ENCODE measurements at regions of chr4 and their contacts with region 1.

Region 1: GRCh38 chr4:121192480-121192879 is 28.4 kb upstream of the TNIP3 start:
- DNase-seq: peak; percentile 16
- ATAC-seq: no peak
- H3K4me3 ChIP-seq: no peak overlapping the region
- H3K27ac ChIP-seq: no peak overlapping the region
- H3K4me1 ChIP-seq: no peaks in the 10 kb centered on the region
- H3K27me3 ChIP-seq: no peaks in the 10 kb centered on the region; a peak in 1 of 5 replicates
- CTCF ChIP-seq: peak; percentile 77
- EP300 ChIP-seq: no peak
- POLR2A ChIP-seq: no peak
- RAD21 ChIP-seq: peak; percentile 32; the same call in 1 of the 2 replicates

Region 2: GRCh38 chr4:121252224-121252806 is 59.8 kb after region 1 on chr4:
- CTCF ChIA-PET with region 1: interaction called, 24 read pairs
- POLR2A ChIA-PET with region 1: no interaction called
- in situ Hi-C with region 1: loop called (anchors 5 kb)
- intact Hi-C with region 1: loop called (anchors 1 kb)
- DNase-seq: peak; percentile 51
- ATAC-seq: peak; percentile 94
- H3K4me3 ChIP-seq: no peak overlapping the region
- H3K27ac ChIP-seq: no peak overlapping the region
- H3K4me1 ChIP-seq: no peaks in the 10 kb centered on the region
- H3K27me3 ChIP-seq: no peaks in the 10 kb centered on the region
- CTCF ChIP-seq: peak; percentile 80
- EP300 ChIP-seq: no peak
- POLR2A ChIP-seq: no peak
- RAD21 ChIP-seq: peak; percentile 49

Region 3: DNA sequence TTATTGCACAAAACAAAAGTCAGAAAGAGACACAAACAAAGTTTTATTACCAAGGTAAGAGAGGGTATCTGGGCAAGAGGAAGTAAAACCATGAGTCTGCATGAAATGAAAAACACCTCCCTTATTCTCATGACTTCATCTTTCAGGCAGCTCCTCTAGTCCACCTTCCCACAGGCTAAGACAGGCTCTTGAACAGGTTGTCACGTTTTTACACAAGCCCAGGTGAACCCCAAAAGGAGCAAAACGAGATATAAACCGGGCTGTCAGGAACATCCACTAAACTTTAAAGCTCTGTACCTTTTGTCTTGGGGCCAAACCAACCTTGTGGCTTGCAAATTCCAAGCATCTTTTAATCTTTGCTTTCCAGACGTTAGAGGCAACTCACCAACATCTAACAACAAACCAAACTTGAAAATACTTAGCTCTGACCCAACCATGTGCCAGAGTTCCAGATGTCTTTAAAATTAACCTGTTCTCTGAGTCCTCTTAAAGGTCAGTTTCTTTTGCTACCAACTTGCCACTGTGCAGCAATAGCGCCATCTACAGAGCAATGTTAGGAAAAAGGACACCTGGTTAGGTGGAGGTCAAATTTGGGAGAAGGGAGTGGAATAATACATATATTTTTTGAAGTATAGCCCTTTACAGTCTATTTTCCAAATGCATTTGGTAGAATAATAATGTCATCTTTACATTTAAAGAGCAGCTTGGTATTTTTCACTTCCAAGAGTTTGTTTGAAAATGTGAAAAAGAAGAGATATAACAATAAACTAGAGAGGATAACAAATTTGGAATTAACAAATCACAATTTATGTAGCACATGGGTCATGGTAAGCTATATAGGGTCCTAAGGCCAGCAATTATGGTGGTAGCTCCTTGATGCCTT is 115.2 kb after region 1 on chr4:
- CTCF ChIA-PET with region 1: no interaction called
- POLR2A ChIA-PET with region 1: no interaction called
- in situ Hi-C with region 1: no loop called
- intact Hi-C with region 1: loop called (anchors 5 kb)
- DNase-seq: peak; percentile 34
- ATAC-seq: peak; percentile 61; the same call in 2 of the 3 replicates
- H3K4me3 ChIP-seq: no peak overlapping the region
- H3K27ac ChIP-seq: no peak overlapping the region
- H3K4me1 ChIP-seq: no peaks in the 10 kb centered on the region
- H3K27me3 ChIP-seq: no peaks in the 10 kb centered on the region
- CTCF ChIP-seq: peak; percentile 56
- EP300 ChIP-seq: no peak
- POLR2A ChIP-seq: no peak
- RAD21 ChIP-seq: 0 out of 2 replicates have a peak, but pooled peaks have one; percentile 17

Region 4: DNA sequence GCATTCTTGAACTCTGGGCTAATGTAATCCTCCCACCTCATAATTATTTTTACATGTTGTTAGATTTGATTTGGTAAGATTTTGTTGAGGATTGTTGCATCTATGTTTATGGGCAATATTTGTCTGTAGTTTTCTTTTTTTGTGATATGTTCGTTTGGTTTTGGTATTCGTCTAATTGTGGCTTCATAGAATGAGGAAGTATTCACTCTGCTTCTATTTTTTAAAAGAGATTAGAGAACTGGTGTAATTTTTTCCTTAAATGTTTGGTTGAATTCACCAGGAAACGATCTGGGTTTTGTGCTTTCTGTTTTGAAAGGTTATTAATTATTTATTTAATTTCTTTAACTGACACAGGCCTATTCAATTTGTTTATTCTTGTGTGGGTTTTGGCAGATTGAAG is 1891.2 kb after region 1 on chr4:
- CTCF ChIA-PET with region 1: no interaction called
- POLR2A ChIA-PET with region 1: no interaction called
- in situ Hi-C with region 1: no loop called
- intact Hi-C with region 1: no loop called
- DNase-seq: no peak
- ATAC-seq: no peak
- H3K4me3 ChIP-seq: no peak overlapping the region
- H3K27ac ChIP-seq: no peak overlapping the region
- H3K4me1 ChIP-seq: peaks cover 6% of the 10 kb centered on the region; the same call in 1 of the 2 replicates
- H3K27me3 ChIP-seq: no peaks in the 10 kb centered on the region
- CTCF ChIP-seq: no peak
- EP300 ChIP-seq: no peak
- POLR2A ChIP-seq: no peak
- RAD21 ChIP-seq: no peak

Measured in HepG2 (cell line).